ENCODE measurements at regions of chr1 and their contacts with region 1.

Region 1: GRCh38 chr1:22131875-22132486 is 10.9 kb downstream of the WNT4 start:
- DNase-seq: peak; percentile 39 to 78
- H3K4me3 ChIP-seq: no peak overlapping the region
- H3K4me1 ChIP-seq: no peaks in the 10 kb centered on the region
- H3K27me3 ChIP-seq: no peaks in the 10 kb centered on the region

Region 2: GRCh38 chr1:21607549-21608529 is 524.1 kb before region 1 on chr1:
- in situ Hi-C with region 1: no loop called
- DNase-seq: peak; percentile 91 to 100
- H3K4me3 ChIP-seq: no peak overlapping the region
- H3K4me1 ChIP-seq: peaks cover 7% of the 10 kb centered on the region; the same call in 1 of the 2 replicates
- H3K27me3 ChIP-seq: no peaks in the 10 kb centered on the region

Region 3: GRCh38 chr1:22416555-22417454 is 284.8 kb after region 1 on chr1:
- in situ Hi-C with region 1: loop called (anchors 5 kb)
- DNase-seq: peak; percentile 72 to 91
- H3K4me3 ChIP-seq: no peak overlapping the region
- H3K4me1 ChIP-seq: no peaks in the 10 kb centered on the region
- H3K27me3 ChIP-seq: peaks cover 7% of the 10 kb centered on the region